Activated CD4-positive, alpha-beta T cell treated with anti-CD3 and anti-CD28 coated beads, Interleukin-2, amount 10 ng/mL, durations not matched to agents 7 days and 5 days (primary cell): ENCODE measurements at regions of chr19 and their contacts with region 1.

Region 1: GRCh38 chr19:17385878-17386611 is 8.0 kb downstream of the CCDC194 start:
- DNase-seq: peak; percentile 66
- H3K4me3 Mint-ChIP-seq: no peak overlapping the region
- H3K27ac Mint-ChIP-seq: no peak overlapping the region
- H3K4me1 Mint-ChIP-seq: peaks cover 17% of the 10 kb centered on the region
- H3K27me3 Mint-ChIP-seq: peaks cover 22% of the 10 kb centered on the region

Region 2: DNA sequence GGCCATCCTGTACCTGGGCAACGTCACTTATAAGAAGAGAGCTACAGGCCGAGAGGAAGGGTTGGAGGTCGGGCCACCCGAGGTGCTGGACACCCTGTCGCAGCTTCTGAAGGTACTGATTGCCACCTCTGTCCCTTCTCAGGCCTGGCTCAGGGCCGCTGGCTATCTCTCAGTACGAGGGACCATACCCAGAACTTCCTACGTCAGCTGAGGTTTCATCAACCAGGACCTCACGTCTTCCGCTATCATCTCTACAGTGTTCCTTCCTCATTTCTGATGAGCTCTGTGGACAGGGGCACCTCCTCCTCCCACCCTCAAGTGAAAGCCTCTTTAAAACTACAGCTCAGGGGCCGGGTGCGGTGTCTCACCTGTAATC is 229.1 kb before region 1 on chr19:
- CTCF ChIA-PET with region 1: no interaction called
- POLR2A ChIA-PET with region 1: no interaction called
- DNase-seq: no peak
- H3K4me3 Mint-ChIP-seq: no peak overlapping the region
- H3K27ac Mint-ChIP-seq: no peak overlapping the region
- H3K4me1 Mint-ChIP-seq: no peaks in the 10 kb centered on the region
- H3K27me3 Mint-ChIP-seq: no peaks in the 10 kb centered on the region

Region 3: GRCh38 chr19:17365361-17365760 is 20.7 kb before region 1 on chr19:
- CTCF ChIA-PET with region 1: interaction called, 11 read pairs
- POLR2A ChIA-PET with region 1: no interaction called
- DNase-seq: no peak
- H3K4me3 Mint-ChIP-seq: no peak overlapping the region
- H3K27ac Mint-ChIP-seq: no peak overlapping the region
- H3K4me1 Mint-ChIP-seq: peaks cover 4% of the 10 kb centered on the region
- H3K27me3 Mint-ChIP-seq: peaks cover 8% of the 10 kb centered on the region